ENCODE measurements at regions of chr6 and their contacts with region 1.

Region 1: DNA sequence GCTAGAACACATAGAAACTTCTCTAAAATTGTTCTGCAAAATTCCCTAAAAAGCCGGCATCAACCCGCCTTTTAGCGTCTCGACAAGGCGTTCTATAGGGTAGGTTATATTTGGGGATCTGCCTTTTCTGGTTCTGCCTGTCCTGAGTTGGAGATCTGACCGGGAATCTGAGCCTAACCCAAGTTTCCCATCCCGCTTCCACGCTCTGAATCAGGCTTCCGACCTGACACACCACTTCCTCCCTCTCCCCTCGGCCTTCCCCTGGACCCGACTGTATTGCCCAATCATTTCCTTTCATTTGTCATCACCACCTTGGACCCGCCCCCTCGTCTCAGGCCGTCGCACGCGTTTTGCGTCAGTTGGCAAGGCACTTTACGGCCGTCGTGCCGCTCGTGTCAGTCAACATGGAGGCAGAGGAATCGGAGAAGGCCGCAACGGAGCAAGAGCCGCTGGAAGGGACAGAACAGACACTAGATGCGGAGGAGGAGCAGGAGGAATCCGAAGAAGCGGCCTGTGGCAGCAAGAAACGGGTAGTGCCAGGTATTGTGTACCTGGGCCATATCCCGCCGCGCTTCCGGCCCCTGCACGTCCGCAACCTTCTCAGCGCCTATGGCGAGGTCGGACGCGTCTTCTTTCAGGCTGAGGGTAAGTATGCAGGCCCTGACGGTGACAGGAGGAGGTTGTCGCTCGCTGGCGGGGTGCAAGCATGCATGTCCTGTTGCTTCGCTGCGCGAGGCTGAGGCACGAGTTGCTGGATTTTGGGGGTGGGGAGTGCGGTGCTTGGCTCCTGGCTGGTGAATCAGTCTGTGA is at the start of gene ABT1:
- DNase-seq: peak; percentile 96 to 100 (median 98)

Region 2: DNA sequence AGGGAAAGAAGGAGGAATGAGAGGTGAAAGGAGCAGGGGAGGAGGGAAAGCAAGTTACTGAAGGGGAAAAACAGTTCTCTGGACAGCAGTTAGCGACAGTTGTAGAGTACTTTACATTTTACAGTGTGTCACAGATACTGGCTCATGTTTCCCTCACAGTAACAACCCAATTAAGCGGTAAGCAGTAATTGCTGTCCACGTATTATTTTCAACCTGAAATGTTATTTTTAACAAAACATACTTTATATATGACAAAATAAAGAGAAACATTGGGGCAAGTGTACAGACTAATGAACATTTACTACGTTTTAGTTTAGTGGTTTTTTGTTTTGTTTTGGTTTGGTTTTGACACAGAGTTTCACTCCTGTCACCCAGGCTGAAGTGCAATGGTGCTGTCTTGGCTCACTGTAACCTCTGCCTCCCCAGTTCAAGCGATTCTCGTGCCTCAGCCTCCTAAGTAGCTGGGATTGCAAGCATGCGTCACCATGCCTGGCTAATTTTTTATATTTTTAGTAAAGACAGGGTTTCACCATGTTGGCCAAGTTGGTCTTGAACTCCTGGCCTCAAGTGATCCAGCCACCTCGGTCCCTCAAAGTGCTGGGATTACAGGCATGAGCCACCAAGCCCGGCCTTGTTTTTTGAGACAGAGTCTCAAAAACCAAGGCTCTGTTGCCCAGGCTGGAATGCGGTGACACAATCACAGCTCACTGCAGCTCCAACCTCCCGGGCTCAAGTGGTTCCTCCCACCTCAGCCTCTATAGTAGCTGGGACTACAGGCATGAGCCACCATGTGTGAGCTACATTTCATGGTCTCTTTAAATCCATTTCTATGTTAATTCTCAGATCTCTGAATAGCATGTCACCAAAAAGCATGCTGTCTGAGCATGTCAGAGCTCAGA is 254.4 kb before region 1 on chr6:
- intact Hi-C with region 1: loop called (anchors 1 kb)
- DNase-seq: no peak

Region 3: GRCh38 chr6:26363882-26364701 is 232.7 kb before region 1 on chr6:
- intact Hi-C with region 1: no loop called
- DNase-seq: no peak

Region 4: DNA sequence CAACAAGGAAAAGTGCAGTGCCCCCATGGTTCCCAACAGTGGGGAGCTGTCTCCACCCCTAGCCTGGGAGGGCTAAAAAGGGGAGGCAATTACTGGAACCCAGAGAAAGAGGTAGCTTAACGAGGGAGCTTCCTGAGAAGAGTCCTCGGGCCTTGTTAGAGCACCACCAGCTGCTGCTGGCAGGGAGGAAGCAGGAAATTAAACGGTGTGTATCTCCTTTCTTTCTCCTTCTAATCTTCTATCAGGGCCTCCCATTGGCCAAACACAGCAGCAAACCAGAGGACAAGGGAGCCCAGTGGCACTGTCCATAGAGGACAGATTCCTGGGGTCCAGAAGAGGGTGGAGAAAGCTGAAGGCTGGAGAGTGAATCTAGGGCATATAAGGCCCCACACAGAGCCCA is 221.5 kb before region 1 on chr6:
- intact Hi-C with region 1: no loop called
- DNase-seq: no peak

Region 5: GRCh38 chr6:26537846-26538571 is 58.8 kb before region 1 on chr6 and contains the start of gene HMGN4:
- intact Hi-C with region 1: loop called (anchors 10 kb)
- DNase-seq: peak; percentile 66 to 98 (median 81)

Region 6: DNA sequence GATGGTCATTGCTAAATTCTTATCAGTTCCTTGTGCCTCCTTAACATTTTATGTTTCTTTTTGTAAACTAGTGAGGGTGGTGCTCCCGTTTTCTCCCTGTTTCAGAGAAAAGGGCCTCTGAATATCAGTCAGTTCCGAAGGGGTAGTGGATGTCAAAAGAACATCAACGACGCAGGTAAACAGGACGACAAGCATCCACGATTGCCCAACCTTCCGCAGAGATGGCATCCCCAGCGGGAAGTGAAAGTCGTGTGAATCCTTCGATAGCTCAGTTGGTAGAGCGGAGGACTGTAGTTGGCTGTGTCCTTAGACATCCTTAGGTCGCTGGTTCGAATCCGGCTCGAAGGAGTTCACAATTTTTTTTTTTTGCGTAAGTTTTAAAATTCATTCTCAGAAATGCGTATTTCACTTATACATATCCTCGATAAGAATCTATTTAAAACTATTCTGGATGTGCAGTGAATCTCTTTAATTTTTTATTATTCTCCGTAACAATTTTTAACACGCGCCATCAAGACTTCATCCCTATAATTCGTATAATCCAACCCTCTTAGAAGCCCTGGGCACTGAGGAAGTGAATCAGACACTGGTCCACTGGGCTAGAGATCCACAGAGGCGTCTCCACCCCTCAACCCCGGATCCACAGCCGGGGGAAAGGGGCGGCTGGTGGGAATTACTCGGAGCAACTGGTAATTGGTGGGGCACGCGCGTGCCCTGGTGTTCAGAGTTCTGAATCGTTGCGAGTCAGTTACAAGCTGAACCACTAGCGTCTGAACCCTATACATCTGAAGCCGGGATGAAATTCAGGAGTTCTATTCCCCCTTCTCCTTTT is 28.0 kb before region 1 on chr6:
- intact Hi-C with region 1: loop called (anchors 1 kb)
- DNase-seq: peak; percentile 88 to 99 (median 95)

Region 7: GRCh38 chr6:26743157-26743821 is 146.5 kb after region 1 on chr6:
- intact Hi-C with region 1: no loop called
- DNase-seq: peak in 2 of 10 donors; percentile 49 to 51

Measured in posterior cingulate gyrus (tissue), 11 donors.